Dorsolateral prefrontal cortex (tissue), 120 donors: ENCODE measurements at regions of chr13 and their contacts with region 1.

Region 1: GRCh38 chr13:50911937-50912795 is 2.6 kb downstream of the RNASEH2B start:
- DNase-seq: peak; percentile 80 to 93 (median 86)
- H3K4me3 ChIP-seq: peak overlapping the region in 20 of 59 donors; percentile 1 to 92 (median 82)
- H3K27ac ChIP-seq: peak overlapping the region in 1 of 59 donors; percentile 15
- H3K27me3 ChIP-seq: no peaks in the 10 kb centered on the region
- CTCF ChIP-seq: peak; percentile 63 to 95 (median 89)

Region 2: GRCh38 chr13:49976314-49977258 is 935.6 kb before region 1 on chr13:
- intact Hi-C with region 1: loop called in 1 of 2 experiments (anchors 1 kb)
- DNase-seq: peak; percentile 53 to 83 (median 68)
- H3K4me3 ChIP-seq: no peak overlapping the region
- H3K27ac ChIP-seq: peak overlapping the region in 9 of 59 donors; percentile 10 to 60 (median 41)
- H3K27me3 ChIP-seq: no peaks in the 10 kb centered on the region
- CTCF ChIP-seq: peak; percentile 75 to 98 (median 88)

Region 3: GRCh38 chr13:50410921-50411712 is 501.0 kb before region 1 on chr13:
- intact Hi-C with region 1: no loop called
- DNase-seq: no peak
- H3K4me3 ChIP-seq: no peak overlapping the region
- H3K27ac ChIP-seq: no peak overlapping the region
- H3K27me3 ChIP-seq: no peaks in the 10 kb centered on the region
- CTCF ChIP-seq: no peak

Region 4: DNA sequence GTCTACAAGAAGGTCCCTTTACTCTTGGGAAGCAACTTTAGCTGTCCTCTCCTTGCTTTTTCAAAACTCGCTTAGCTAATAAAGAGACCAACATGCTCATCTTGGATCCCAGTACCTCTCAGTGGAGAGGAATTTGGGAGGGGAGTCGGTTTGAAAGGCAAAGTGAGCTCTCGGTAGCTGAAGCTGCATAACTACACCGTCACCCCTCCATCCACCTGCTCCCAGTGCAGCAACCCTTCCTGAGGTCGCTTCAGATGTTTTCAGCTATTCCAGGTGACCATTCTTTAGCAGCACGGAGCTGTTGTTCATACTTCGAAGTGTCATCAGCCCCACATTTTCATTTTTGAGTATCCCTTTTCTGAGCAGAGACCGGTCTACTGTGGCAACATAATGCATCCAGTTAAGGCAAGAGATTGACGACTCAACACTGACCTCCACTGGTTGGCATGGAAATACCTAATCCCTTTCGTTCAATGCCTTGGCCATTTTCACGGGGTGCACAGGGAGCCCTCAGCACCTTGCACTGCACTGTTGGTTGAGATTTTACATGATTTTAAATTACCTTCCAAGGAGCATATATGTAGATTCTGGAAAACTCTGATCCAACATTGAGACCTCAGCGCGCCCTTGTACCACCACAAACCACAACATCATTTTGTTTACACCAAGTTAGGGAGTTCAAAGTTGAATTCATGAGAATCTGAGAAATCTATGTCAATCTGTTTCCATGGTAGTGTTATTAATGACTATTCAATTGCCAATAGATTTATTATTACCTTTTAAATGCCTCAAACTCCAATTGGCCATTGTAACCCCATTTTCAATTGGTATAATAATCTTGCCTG is 110.9 kb before region 1 on chr13:
- intact Hi-C with region 1: no loop called
- DNase-seq: peak in 8 of 10 donors; percentile 32 to 65 (median 50)
- H3K4me3 ChIP-seq: peak overlapping the region in 20 of 59 donors; percentile 3 to 46 (median 22)
- H3K27ac ChIP-seq: peak overlapping the region in 7 of 59 donors; percentile 13 to 65 (median 33)
- H3K27me3 ChIP-seq: no peaks in the 10 kb centered on the region
- CTCF ChIP-seq: peak; percentile 46 to 90 (median 79)

Region 5: GRCh38 chr13:50873467-50873866 is 38.7 kb before region 1 on chr13:
- intact Hi-C with region 1: no loop called
- DNase-seq: no peak
- H3K4me3 ChIP-seq: no peak overlapping the region
- H3K27ac ChIP-seq: no peak overlapping the region
- H3K27me3 ChIP-seq: no peaks in the 10 kb centered on the region
- CTCF ChIP-seq: no peak

Region 6: GRCh38 chr13:50991579-50992521 is 79.7 kb after region 1 on chr13:
- intact Hi-C with region 1: no loop called
- DNase-seq: peak in 1 of 10 donors; percentile 71
- H3K4me3 ChIP-seq: peak overlapping the region in 13 of 59 donors; percentile 38 to 60 (median 50)
- H3K27ac ChIP-seq: peak overlapping the region in 25 of 59 donors; percentile 2 to 93 (median 42)
- H3K27me3 ChIP-seq: no peaks in the 10 kb centered on the region
- CTCF ChIP-seq: no peak